Right ventricle myocardium superior (tissue), 1 donor: ENCODE measurements at regions of chr4 and their contacts with region 1.

Region 1: GRCh38 chr4:128863312-128864075 is 54.0 kb downstream of the JADE1 start:
- DNase-seq: peak; percentile 67
- ATAC-seq: peak; percentile 81

Region 2: DNA sequence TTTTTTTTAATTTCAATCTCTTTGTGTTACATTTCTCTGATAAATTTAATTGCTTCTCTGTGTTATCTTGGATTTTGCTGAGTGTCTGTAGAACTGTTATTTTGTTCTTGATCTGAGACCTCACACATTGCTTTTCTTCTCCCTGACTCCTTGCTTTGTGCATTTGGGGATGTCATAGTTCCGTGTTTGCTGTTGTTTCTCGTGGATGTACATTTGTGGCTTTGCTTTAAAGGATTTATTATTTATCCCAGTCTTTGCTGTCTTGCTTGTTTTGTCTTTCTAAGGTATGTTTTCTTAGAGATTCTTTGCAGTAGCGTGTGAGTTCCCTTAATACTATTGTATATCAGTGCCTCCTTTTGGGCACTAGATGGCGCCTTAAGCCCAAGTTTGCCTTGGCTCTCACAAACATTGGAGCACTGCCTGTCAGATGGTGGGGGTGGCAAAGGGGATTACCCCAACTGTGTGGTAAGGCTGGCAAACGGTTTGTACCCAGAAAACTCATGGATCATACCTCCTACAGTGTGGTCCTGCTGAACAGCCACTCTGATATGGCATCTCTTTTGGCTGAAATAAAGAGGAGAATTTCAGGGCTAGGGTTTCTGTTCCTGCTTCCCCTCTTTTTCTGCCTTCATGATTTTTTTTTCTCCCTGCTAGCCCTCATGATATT is 672.2 kb before region 1 on chr4:
- intact Hi-C with region 1: loop called (anchors 10 kb)
- DNase-seq: peak; percentile 54
- ATAC-seq: peak; percentile 90

Region 3: GRCh38 chr4:128454281-128455075 is 409.0 kb before region 1 on chr4:
- intact Hi-C with region 1: loop called (anchors 10 kb)
- DNase-seq: peak; percentile 77
- ATAC-seq: peak; percentile 94

Region 4: GRCh38 chr4:128565565-128566186 is 297.8 kb before region 1 on chr4:
- intact Hi-C with region 1: loop called (anchors 5 kb)
- DNase-seq: peak; percentile 64
- ATAC-seq: peak; percentile 79

Region 5: DNA sequence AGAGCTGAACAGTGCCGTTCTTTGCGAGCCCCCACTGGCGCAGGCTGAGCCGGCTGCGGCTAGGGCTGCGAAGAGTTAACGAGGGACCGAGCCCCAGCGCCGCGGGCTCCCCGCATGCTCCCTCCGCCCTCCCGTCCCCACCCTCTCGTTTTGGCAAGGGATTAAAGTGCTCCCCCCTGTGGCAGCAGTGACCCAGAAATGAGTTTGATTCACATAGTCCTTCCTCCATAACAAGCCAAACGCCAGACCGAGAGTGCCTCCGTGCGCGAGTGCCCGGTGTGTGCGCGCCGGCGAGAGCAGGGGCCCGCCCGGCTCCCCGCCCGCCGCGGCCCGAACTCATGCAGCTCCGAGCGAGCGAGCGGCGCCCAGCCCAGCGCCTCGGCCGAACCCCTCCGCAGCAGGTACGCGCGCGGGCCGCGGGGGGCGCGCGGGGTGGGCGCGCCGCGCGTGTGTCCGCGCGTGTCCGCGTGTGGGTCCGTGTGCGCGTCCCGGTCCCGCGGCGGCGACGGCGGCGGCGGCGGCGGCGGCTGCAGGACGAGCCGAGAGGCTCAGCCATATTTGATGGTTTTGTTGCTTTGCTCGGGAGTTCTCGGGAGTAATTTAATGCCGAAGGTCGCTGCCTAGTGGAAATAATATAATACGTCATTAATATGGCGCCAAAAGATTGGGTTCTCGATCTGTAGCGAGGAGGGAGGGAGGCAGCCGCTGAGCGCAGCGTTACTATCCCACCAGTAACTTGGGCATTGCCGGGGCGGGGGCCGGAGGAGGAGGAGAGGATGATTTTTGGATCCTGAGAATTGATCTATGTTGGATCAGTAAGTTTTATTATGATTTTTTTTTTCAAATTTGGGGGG is 53.8 kb before region 1 on chr4 and contains the start of gene JADE1:
- intact Hi-C with region 1: loop called (anchors 10 kb)
- DNase-seq: peak; percentile 93
- ATAC-seq: peak; percentile 75
- total RNA-seq, gene JADE1: 26.0 TPM

Region 6: GRCh38 chr4:128974136-128974581 is 110.7 kb after region 1 on chr4:
- intact Hi-C with region 1: no loop called
- DNase-seq: no peak
- ATAC-seq: no peak